PC-9 (cell line): ENCODE measurements at regions of chr12 and their contacts with region 1.

Region 1: DNA sequence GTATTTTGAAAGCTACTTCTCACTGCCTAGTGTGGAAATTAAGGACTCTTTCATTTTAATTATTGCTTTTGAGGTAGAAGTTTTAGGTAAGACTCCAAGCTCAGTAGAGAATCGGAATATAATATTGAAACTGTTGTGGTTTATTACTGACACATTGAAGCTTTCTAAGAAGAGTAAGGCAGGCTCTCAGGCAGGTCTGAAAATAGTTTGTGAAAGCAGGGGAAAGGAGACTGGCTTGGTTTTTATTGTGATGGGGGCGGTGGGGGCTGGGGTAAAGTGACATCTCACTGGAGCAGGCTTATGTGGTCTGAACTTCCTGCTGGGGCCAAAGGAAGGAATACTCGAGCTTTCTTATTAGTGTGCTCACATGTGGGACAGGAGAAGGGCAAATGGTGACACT is 79.5 kb downstream of the OTOGL start:
- DNase-seq: no peak
- H3K4me3 ChIP-seq: no peak overlapping the region
- H3K27ac ChIP-seq: no peak overlapping the region
- H3K4me1 ChIP-seq: 0 out of 2 replicates have a peak, but pooled peaks cover 6% of the 10 kb centered on the region
- H3K27me3 ChIP-seq: no peaks in the 10 kb centered on the region
- CTCF ChIP-seq: no peak

Region 2: GRCh38 chr12:79658221-79658620 is 520.6 kb before region 1 on chr12:
- CTCF ChIA-PET with region 1: interaction called, 21 read pairs
- POLR2A ChIA-PET with region 1: no interaction called
- intact Hi-C with region 1: no loop called
- DNase-seq: no peak
- H3K4me3 ChIP-seq: no peak overlapping the region
- H3K27ac ChIP-seq: no peak overlapping the region
- H3K4me1 ChIP-seq: no peaks in the 10 kb centered on the region
- H3K27me3 ChIP-seq: no peaks in the 10 kb centered on the region
- CTCF ChIP-seq: no peak

Region 3: GRCh38 chr12:80353257-80353656 is 174.4 kb after region 1 on chr12:
- CTCF ChIA-PET with region 1: no interaction called
- POLR2A ChIA-PET with region 1: no interaction called
- intact Hi-C with region 1: no loop called
- DNase-seq: no peak
- H3K4me3 ChIP-seq: no peak overlapping the region
- H3K27ac ChIP-seq: no peak overlapping the region
- H3K4me1 ChIP-seq: no peaks in the 10 kb centered on the region
- H3K27me3 ChIP-seq: no peaks in the 10 kb centered on the region
- CTCF ChIP-seq: no peak